ENCODE measurements at regions of chr6 and their contacts with region 1.

Region 1: DNA sequence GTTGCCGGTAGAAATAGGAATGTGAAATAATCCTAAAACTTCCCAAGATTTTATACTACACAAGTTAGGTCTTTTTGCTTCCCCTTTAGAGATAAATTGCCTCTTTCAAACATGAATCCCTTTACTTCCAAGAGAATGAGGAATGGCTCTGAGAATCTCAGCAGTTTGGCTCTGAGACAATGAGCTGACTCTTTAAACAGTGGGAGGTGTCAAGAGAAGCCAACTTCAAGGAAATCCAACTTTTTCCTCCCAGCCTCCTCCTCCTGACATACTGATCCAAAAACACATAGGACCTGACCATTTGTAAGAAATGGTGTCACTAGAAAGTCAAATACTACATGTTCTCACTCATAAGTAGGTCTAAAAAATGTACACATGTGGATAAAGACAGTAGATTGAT is 154.2 kb downstream of the ALDH8A1 start:
- DNase-seq: no peak
- ATAC-seq: no peak

Region 2: GRCh38 chr6:134678436-134678889 is 117.2 kb before region 1 on chr6:
- intact Hi-C with region 1: loop called (anchors 10 kb)
- DNase-seq: peak; percentile 67
- ATAC-seq: peak; percentile 88

Measured in left ventricle myocardium superior (tissue), 1 donor.